ENCODE measurements at regions of chr1 and their contacts with region 1.

Region 1: DNA sequence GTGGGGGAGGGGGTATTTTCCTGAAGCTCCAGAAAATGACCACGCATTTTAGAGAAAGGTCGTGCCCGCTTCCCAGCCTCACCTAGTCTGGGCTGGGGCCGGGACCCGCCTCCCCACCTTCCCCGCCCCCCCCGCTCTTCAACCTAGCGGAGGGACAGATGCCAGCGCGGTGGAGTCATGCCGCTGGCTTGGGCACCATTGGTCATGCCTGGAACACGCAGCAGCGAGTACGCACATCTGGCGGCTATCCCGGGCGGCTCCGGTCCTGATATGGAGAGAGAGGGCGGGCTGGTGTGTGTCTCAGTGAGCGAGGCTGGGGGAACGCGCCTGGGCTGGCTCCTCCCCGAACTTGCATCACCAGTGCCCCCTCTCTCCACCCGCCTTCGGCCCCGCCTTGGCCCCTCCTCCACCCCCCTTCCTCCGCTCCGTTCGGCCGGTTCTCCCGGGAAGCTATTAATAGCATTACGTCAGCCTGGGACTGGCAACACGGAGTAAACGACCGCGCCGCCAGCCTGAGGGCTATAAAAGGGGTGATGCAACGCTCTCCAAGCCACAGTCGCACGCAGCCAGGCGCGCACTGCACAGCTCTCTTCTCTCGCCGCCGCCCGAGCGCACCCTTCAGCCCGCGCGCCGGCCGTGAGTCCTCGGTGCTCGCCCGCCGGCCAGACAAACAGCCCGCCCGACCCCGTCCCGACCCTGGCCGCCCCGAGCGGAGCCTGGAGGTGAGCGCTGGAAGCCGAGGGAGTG is at the start of gene ATF3:
- DNase-seq: peak; percentile 90
- H3K4me3 Mint-ChIP-seq: peak within 1 kb of the TSS; percentile 95
- H3K27ac Mint-ChIP-seq: peak within 1 kb of the TSS; percentile 97
- H3K4me1 Mint-ChIP-seq: peaks cover 63% of the 10 kb centered on the region
- H3K27me3 Mint-ChIP-seq: peaks cover 36% of the 10 kb centered on the region
- total RNA-seq, gene ATF3: 23.0 and 23.3 TPM in 2 replicates

Region 2: DNA sequence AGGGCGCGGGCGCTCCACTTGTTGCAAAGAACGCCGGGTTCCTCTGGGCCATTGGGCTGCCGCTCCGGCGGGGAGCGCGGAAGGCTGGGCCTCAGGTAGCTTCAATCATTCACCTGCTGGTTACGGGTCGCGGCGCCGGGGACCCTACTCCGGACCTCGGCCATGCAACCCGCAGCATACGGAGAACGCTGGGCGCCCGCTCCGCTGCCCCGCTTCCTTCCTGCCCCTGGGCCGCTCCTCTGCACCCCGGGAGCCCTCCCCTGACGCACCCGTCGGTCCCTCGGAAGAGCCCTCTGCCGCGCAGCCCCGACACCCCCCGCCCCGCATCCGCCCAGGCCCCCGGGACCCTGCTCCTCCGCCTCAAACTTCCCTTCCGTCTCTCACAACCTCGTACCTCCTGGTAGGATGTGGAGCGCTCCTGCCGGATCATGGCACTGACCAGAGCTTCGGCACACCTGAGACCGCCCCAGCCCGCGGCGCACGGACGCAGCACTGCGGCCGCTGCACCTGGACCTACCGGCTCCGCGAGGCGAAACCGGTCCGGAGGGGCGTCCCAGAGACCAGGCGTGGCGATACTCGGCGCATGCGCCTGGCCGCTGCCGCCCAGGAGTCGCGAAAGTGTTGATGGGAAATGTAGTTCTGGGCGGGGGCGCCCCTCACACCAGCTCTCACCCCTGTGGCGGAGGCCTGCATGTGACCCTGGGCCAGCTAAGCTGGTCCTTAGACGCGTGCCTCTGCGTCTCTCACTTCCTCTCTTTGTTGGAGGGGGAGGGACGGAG is 193.9 kb before region 1 on chr1 and contains the start of gene PACC1:
- intact Hi-C with region 1: loop called (anchors 5 kb)
- DNase-seq: peak; percentile 88
- H3K4me3 Mint-ChIP-seq: peak within 1 kb of the TSS; percentile 100
- H3K27ac Mint-ChIP-seq: peak within 1 kb of the TSS; percentile 97
- H3K4me1 Mint-ChIP-seq: peaks cover 21% of the 10 kb centered on the region
- H3K27me3 Mint-ChIP-seq: peaks cover 6% of the 10 kb centered on the region
- total RNA-seq, gene PACC1: 17.6 and 19.8 TPM in 2 replicates

Region 3: DNA sequence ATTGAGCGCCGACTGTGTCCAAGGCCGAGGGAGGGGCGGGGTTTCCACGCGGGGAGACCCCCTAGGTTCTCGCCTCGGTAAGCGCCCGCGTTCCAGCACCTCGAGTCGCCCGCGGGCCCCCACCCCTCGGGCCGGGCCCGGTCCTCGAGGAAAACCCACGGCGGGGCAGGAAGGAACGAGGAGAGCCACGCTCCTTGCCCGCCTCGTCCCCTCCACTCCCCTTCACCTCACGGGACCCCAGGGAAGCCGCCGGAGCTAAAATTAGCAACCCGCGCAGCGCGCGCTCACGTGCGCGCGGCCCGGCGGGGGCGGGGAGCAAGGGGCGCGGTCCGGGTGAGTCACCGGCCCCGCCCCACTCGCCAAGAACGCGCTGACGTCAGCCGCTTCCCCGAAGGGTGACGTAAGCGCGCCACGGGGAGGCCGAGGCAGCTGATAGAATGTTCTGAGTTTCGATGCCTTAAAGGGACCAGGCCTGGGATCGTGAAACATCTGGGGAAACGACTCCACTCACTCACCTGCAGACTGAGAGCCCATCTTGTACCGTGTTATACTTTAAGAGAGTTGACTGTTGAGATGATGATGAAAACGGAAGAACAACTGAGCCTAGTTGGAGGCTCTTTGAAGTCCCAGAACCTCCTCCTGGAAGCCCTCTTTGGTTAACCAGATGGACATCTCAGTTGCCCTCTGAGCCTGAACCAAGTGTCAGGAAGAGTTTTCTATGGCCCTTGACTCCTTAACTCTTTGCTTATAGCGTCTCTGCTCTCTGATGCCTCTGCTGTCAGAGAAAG is 49.5 kb before region 1 on chr1:
- intact Hi-C with region 1: loop called (anchors 1 kb)
- DNase-seq: peak; percentile 88
- H3K4me3 Mint-ChIP-seq: peak overlapping the region; percentile 61
- H3K27ac Mint-ChIP-seq: peak overlapping the region; percentile 93
- H3K4me1 Mint-ChIP-seq: peaks cover 10% of the 10 kb centered on the region
- H3K27me3 Mint-ChIP-seq: peaks cover 38% of the 10 kb centered on the region

Region 4: GRCh38 chr1:212630158-212630900 is 21.9 kb after region 1 on chr1:
- intact Hi-C with region 1: loop called (anchors 2 kb)
- DNase-seq: peak; percentile 48
- H3K4me3 Mint-ChIP-seq: no peak overlapping the region
- H3K27ac Mint-ChIP-seq: no peak overlapping the region
- H3K4me1 Mint-ChIP-seq: peaks cover 11% of the 10 kb centered on the region
- H3K27me3 Mint-ChIP-seq: peaks cover 6% of the 10 kb centered on the region

Region 5: GRCh38 chr1:212699104-212699624 is 90.8 kb after region 1 on chr1:
- intact Hi-C with region 1: loop called (anchors 2 kb)
- DNase-seq: peak; percentile 43
- H3K4me3 Mint-ChIP-seq: peak overlapping the region; percentile 92
- H3K27ac Mint-ChIP-seq: peak overlapping the region; percentile 66
- H3K4me1 Mint-ChIP-seq: peaks cover 57% of the 10 kb centered on the region
- H3K27me3 Mint-ChIP-seq: peaks cover 12% of the 10 kb centered on the region

Region 6: GRCh38 chr1:212990276-212990675 is 381.9 kb after region 1 on chr1:
- intact Hi-C with region 1: loop called (anchors 5 kb)
- DNase-seq: no peak
- H3K4me3 Mint-ChIP-seq: no peak overlapping the region
- H3K27ac Mint-ChIP-seq: no peak overlapping the region
- H3K4me1 Mint-ChIP-seq: peaks cover under 1% of the 10 kb centered on the region
- H3K27me3 Mint-ChIP-seq: no peaks in the 10 kb centered on the region